Mucosa of descending colon (tissue), 3 donors: ENCODE measurements at regions of chr10 and their contacts with region 1.

Region 1: DNA sequence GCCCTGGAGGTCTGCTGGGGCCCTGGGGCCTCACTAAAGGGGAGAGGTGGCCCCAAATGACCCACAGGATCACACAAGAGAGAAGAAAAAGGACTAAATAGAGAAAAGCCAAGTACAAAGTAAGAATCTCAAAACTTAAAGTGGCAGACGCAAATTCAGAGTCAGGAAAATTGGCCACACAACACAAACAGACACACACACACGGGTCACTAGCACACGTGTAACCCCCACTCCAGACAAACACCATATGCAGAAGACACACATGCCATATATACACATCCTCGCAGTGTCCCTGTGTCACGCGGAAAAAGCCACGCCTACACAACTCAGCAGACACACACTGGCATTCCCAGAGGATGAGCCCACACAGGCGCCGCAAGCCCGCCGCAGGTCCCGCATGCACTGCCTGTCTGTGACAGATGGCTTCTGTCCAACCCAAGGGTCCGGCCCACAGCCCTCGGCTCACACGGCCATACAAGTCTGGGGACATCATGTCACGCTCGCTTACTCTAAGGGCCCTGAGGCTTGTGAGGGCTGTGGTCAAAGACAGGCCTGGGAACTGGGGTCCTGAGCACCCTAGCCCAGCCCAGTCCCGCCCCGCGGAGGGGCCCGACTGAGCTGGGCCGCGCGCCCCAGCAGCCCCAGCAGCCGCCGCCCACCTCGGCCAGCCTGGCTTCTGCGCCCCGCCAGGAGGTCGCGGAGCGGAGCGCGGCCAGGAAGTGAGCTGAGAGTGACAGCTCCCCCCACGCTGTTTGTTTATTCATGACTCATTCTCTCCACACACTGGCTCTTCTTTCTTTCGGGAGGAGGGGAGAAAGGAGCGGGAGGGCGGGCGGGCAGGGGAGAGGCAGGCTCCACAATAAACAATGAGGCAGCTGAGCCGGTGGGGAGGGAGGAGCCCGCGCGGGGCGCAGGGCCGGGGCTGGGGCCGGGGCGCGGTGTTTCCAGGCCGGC is 95.5 kb upstream of the ZMIZ1 start:
- DNase-seq: peak; percentile 78 to 84 (median 79)
- ATAC-seq: peak; percentile 83
- H3K4me3 ChIP-seq: no peak overlapping the region
- H3K4me1 ChIP-seq: peaks cover 14% of the 10 kb centered on the region
- CTCF ChIP-seq: no peak

Region 2: DNA sequence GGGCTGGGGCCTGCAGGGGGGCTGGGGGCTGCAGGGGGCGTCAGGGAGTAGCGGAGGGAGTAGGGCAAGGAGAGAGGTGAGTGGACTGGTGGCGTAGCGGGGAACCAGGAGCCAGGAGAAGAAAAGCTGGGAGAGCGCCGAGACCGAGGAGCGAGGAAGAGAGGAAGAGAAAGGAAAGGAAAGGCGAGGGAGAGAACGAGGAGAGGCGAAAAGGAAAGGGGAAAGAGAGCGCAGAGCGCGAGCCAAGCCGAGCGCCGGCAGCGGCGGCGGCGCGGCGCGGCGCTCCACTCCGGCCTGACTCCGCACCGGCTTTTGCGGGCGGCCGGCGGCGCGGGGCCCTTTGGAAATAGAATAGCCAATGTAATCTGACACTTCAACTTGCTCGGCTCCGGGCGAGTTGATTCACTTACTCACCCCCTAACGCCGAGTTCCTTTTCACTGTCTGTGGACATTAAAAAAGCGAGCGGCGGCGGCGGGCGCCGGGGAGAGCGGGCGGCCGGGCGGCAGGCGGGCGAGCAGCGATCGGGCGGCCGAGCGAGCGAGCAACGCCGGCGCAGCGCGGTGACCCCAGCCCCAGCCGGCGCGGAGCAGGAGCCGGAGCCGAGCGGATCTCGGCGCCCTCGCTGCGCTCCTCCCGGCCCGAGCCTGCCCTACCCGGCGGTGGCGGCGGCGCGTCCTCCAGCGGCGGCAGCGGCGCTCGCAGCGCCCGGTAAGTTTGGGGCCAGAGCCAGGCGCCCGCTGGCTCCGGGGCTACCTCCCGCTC is 95.5 kb after region 1 on chr10 and contains the start of gene ZMIZ1:
- intact Hi-C with region 1: loop called (anchors 10 kb)
- DNase-seq: peak; percentile 90 to 92 (median 91)
- ATAC-seq: peak; percentile 61
- H3K4me3 ChIP-seq: peak within 1 kb of the TSS; percentile 97
- H3K4me1 ChIP-seq: peaks cover 47% of the 10 kb centered on the region
- CTCF ChIP-seq: no peak
- total RNA-seq, gene ZMIZ1: 61.4 to 103 (median 89.1) TPM